Posterior vena cava (tissue), 2 donors: ENCODE measurements at regions of chr3 and their contacts with region 1.

Region 1: DNA sequence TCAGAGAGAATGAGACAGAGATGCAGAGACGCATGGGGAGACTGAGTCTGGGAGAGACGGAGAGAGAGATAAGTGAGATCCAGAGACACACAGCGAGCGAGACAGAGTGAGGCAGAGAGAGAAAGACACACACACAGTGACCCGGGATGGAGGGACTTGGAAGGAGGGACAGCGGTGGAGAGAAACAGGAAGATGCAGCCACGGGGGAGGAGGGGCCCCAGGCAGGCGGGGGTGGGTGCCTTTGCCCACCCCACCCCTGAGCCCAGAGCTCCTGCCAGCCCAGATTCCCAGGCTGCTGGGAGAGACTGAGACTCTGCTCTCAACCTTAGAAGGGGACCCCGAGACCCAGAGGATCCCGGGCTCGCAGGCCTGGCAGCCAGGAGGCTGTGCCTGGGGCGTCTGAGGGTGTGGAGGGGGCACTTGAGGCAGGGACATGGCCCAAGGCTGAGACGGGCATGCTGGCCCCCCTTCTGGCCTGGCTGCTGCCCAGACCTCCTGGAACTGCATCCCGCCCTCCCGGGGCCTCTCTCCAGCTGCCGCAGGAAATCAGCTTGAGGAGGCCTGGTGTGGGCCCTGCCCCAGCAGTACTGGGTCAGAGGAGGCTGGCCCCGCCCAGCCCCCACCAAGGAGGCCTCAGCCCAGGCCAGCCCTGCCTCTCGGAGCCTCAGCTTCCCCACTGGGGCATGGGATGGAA is 18.1 kb downstream of the H1-8 start:
- DNase-seq: peak; percentile 95

Region 2: DNA sequence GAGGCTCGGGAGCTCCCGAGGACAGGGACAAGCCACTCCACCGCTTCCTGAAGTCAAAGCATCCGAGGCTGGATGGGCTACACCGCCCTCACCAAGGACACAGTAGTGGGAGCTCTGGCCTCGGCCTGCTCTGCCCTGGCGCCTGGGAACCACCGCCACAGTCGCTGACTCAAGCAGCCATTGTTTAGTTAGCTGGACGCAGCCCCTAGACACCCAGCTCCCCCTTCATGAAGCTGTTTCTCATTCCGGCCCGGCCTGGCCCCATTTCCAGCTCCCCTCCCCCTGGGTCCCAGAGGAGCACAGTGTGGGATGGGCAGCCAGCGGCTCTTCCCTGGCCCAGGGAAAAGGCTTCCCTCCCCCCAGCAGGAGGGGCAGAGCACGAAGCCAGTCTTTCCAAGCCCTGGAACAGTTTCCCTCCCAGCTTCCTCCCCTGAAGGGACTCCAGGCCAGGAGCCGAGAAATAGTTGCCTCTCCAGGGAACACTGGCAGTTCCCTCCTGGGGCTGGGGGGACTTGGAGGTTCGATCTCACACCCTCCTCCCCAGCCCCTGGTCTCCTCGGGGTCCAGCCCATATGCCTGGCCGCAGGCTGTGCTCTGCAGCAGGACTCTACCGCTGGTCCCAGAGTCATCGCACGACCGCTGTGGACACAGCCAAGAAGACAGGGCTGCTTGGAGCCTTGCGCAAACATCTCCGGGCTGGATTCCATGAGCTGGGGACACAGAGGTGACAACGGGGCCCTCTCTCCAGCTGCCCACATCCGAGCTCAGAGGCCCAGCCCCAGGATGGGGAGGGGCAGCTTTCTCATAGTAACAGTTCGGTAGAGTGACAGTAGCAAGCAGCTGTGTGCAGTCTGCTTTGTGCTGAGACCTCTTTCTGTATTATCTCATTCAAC is 35.4 kb after region 1 on chr3:
- intact Hi-C with region 1: loop called in 1 of 2 experiments (anchors 5 kb)
- DNase-seq: peak; percentile 97

Region 3: DNA sequence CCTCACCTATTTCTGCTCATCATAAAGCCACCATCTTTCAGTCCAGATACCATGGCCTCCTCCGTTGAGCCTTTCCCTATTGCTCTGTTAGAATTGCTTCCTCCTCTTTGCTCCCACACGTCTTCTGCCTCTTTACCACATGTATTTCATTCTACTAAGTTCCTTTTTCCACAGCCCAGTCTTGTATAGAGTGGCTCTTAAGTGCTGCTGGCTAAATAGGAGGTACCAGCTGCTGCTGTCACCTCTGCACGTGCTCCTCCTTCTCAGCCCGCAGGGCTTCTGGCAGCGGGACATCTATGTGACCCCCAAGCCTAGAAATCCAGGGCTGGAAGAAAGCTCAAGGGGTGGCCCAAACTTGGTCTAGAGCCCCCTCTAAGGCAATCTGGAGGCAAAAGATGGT is 84.2 kb after region 1 on chr3:
- intact Hi-C with region 1: no loop called
- DNase-seq: no peak